CD8-positive, alpha-beta T cell (primary cell): ENCODE measurements at regions of chr2 and their contacts with region 1.

Region 1: DNA sequence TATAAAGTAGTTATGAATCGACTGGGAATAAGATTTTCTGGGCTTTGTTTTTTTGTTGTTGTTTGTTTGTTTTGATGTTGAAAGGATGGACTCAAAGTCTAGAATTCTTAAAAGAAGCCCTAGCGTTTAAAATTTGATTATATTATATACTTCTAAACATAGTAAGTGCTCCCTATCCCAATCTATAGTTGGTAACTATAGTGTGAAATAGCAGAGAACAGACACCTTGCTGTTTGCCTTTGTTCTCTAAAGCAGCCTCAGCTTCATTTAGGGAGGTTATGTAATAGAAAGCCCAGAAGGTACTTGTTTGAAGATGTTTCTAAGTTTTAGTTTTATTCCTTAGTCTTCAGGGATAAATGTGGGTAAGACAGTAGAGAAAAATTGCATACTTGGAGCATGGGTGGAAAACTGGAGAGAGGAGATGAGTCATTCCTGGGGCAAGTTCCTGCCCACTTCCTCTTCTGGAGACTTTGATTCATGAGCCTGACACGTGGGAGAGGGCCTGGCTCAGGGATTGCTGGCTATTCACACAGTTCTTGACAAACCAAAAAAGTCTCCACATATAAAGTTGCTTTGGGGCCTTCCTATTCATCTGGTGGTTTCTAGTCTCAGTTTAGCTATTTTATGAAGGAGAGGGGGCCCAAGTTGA is 131.9 kb downstream of the MYO1B start:
- DNase-seq: peak in 1 of 9 experiments; percentile 18
- ATAC-seq: no peak
- H3K4me3 ChIP-seq: no peak overlapping the region
- H3K4me3 Mint-ChIP-seq: no peak overlapping the region
- H3K27ac ChIP-seq: no peak overlapping the region
- H3K27ac Mint-ChIP-seq: no peak overlapping the region
- H3K4me1 ChIP-seq: no peaks in the 10 kb centered on the region
- H3K4me1 Mint-ChIP-seq: no peaks in the 10 kb centered on the region
- H3K27me3 ChIP-seq: no peaks in the 10 kb centered on the region
- H3K27me3 Mint-ChIP-seq: peaks cover 6% of the 10 kb centered on the region
- CTCF ChIP-seq: no peak

Region 2: GRCh38 chr2:189870381-189871085 is 1506.6 kb before region 1 on chr2:
- CTCF ChIA-PET with region 1: no interaction called
- POLR2A ChIA-PET with region 1: no interaction called
- intact Hi-C with region 1: no loop called
- DNase-seq: no peak
- ATAC-seq: no peak
- H3K4me3 ChIP-seq: no peak overlapping the region
- H3K4me3 Mint-ChIP-seq: no peak overlapping the region
- H3K27ac ChIP-seq: no peak overlapping the region
- H3K27ac Mint-ChIP-seq: no peak overlapping the region
- H3K4me1 ChIP-seq: no peaks in the 10 kb centered on the region
- H3K4me1 Mint-ChIP-seq: peaks cover 5% of the 10 kb centered on the region
- H3K27me3 ChIP-seq: no peaks in the 10 kb centered on the region
- H3K27me3 Mint-ChIP-seq: no peaks in the 10 kb centered on the region
- CTCF ChIP-seq: no peak

Region 3: GRCh38 chr2:191394043-191394442 is 16.9 kb after region 1 on chr2:
- CTCF ChIA-PET with region 1: no interaction called
- POLR2A ChIA-PET with region 1: no interaction called
- intact Hi-C with region 1: loop called in 1 of 2 experiments (anchors 1 kb)
- DNase-seq: no peak
- ATAC-seq: no peak
- H3K4me3 ChIP-seq: no peak overlapping the region
- H3K4me3 Mint-ChIP-seq: no peak overlapping the region
- H3K27ac ChIP-seq: no peak overlapping the region
- H3K27ac Mint-ChIP-seq: no peak overlapping the region
- H3K4me1 ChIP-seq: no peaks in the 10 kb centered on the region
- H3K4me1 Mint-ChIP-seq: no peaks in the 10 kb centered on the region
- H3K27me3 ChIP-seq: no peaks in the 10 kb centered on the region
- H3K27me3 Mint-ChIP-seq: no peaks in the 10 kb centered on the region
- CTCF ChIP-seq: no peak